ENCODE measurements at regions of chr17 and their contacts with region 1.

Region 1: GRCh38 chr17:4366327-4367063 is at the start of gene UBE2G1:
- DNase-seq: peak; percentile 97 to 100 (median 99)
- ATAC-seq: peak; percentile 93
- H3K4me3 ChIP-seq: peak within 1 kb of the TSS; percentile 58
- H3K4me3 Mint-ChIP-seq: peak within 1 kb of the TSS; percentile 82 to 95 (median 89)
- H3K27ac ChIP-seq: peak within 1 kb of the TSS; percentile 94
- H3K27ac Mint-ChIP-seq: peak within 1 kb of the TSS; percentile 91 to 99 (median 96)
- H3K4me1 ChIP-seq: peaks cover 11% of the 10 kb centered on the region in 2 donors
- H3K4me1 Mint-ChIP-seq: peaks cover 15 to 37% (median 33%) of the 10 kb centered on the region in 7 donors
- H3K27me3 ChIP-seq: no peaks in the 10 kb centered on the region
- H3K27me3 Mint-ChIP-seq: no peaks in the 10 kb centered on the region
- total RNA-seq, gene UBE2G1: 50.1 to 63.7 (median 56.6) TPM

Region 2: GRCh38 chr17:2511462-2512369 is 1854.8 kb before region 1 on chr17 and contains the start of gene METTL16:
- CTCF ChIA-PET with region 1: no interaction called
- POLR2A ChIA-PET with region 1: no interaction called
- intact Hi-C with region 1: loop called in 1 of 2 experiments (anchors 5 kb)
- DNase-seq: peak; percentile 86 to 99 (median 95)
- ATAC-seq: peak; percentile 99
- H3K4me3 ChIP-seq: peak within 1 kb of the TSS; percentile 74
- H3K4me3 Mint-ChIP-seq: peak within 1 kb of the TSS in 2 of 10 donors; percentile 33 to 55
- H3K27ac ChIP-seq: peak within 1 kb of the TSS; percentile 89
- H3K27ac Mint-ChIP-seq: peak within 1 kb of the TSS in 2 of 9 donors; percentile 32 to 77
- H3K4me1 ChIP-seq: peaks cover 9 to 14% of the 10 kb centered on the region in 2 donors
- H3K4me1 Mint-ChIP-seq: peaks cover 13 to 22% (median 15%) of the 10 kb centered on the region in 7 donors
- H3K27me3 ChIP-seq: no peaks in the 10 kb centered on the region
- H3K27me3 Mint-ChIP-seq: no peaks in the 10 kb centered on the region
- total RNA-seq, gene METTL16: 33.5 to 67.7 (median 52.7) TPM

Region 3: DNA sequence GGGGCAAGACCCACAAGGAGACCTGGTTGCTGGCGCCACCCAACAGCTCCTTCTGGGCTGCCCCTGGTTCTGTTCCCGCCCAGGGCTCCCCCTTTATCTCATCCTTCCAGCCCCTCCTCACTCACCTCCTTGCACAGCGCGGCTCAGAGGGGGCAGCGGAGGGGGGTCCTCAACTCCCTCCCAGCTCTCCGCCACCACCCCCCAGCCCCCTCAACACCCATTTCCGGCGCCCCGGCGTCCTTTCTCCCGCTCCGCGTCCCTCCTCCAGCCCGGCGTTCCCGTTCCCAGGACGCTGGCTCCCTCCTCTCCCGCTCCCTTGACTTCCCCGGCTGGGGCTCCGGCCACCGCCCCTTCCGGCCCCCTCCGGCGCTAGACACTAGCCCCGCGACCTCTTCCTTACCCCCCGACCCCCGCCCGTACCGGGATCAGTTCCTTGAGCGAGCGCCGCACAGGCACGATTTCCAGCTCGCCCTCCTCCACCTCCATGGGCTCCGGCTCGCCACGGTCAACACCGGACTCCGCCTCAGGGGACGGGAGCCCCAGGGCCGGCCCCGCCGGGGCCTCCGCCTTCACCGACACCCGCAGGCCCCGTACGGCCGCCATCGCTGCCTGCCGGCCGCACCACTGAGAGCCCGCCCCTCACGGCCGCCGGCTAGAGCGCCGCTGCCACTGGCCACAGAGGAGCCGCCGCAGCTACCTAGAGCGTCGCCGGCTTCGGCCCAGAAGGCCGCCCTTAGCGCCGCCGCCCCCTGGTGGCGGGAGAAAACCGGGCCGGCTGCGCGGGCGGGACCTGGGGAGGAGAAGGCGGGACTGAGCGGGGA is 520.7 kb before region 1 on chr17 and contains the start of gene NCBP3:
- CTCF ChIA-PET with region 1: no interaction called
- POLR2A ChIA-PET with region 1: no interaction called
- intact Hi-C with region 1: loop called in 1 of 2 experiments (anchors 1 kb)
- DNase-seq: peak; percentile 79 to 98 (median 90)
- ATAC-seq: peak; percentile 98
- H3K4me3 ChIP-seq: peak within 1 kb of the TSS; percentile 83
- H3K4me3 Mint-ChIP-seq: peak within 1 kb of the TSS; percentile 85 to 98 (median 90)
- H3K27ac ChIP-seq: peak within 1 kb of the TSS; percentile 90
- H3K27ac Mint-ChIP-seq: peak within 1 kb of the TSS; percentile 59 to 95 (median 88)
- H3K4me1 ChIP-seq: peaks cover 12 to 17% of the 10 kb centered on the region in 2 donors
- H3K4me1 Mint-ChIP-seq: peaks cover 18 to 33% (median 24%) of the 10 kb centered on the region in 7 donors
- H3K27me3 ChIP-seq: no peaks in the 10 kb centered on the region
- H3K27me3 Mint-ChIP-seq: peaks cover 0 to 13% (median 0%) of the 10 kb centered on the region in 5 donors
- total RNA-seq, gene NCBP3: 40.6 to 49.4 (median 46.7) TPM

Region 4: DNA sequence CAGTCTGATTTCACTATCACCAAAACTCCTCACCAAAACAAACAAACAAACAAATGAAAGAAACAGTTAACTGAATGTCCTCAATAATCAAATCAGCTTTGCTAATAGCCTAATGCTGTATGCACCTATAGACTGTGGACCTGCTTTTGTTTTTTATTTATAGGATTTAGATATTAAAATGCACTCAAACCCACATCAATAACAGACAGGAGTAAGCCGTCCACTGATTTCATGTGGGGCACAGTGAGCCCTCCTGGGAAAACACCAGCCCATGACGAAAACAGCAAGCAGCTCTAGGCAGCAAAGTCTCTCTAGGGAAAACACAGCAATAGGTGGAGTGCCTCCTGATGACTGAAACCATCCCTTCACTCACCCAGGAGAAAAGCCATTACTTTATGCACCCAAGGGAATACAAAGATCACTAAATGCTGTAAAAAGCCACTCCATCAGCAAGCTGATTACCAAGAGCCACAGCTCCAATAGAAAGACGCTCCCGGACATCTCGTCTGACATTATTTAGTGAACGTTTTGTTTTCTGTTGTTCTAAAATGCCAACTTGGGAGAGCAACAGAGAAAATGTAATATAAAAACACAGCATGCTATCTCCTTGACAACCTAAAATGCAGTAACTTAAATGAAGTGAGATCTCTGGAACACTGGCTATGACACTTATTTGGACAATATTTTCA is 150.5 kb before region 1 on chr17:
- CTCF ChIA-PET with region 1: no interaction called
- POLR2A ChIA-PET with region 1: no interaction called
- intact Hi-C with region 1: loop called (anchors 2 to 5 kb)
- DNase-seq: no peak
- ATAC-seq: no peak
- H3K4me3 ChIP-seq: no peak overlapping the region
- H3K4me3 Mint-ChIP-seq: no peak overlapping the region
- H3K27ac ChIP-seq: no peak overlapping the region
- H3K27ac Mint-ChIP-seq: peak overlapping the region in 5 of 9 donors; percentile 3 to 82 (median 75)
- H3K4me1 ChIP-seq: no peaks in the 10 kb centered on the region
- H3K4me1 Mint-ChIP-seq: peaks cover 7 to 13% (median 11%) of the 10 kb centered on the region in 7 donors
- H3K27me3 ChIP-seq: no peaks in the 10 kb centered on the region
- H3K27me3 Mint-ChIP-seq: no peaks in the 10 kb centered on the region

Region 5: DNA sequence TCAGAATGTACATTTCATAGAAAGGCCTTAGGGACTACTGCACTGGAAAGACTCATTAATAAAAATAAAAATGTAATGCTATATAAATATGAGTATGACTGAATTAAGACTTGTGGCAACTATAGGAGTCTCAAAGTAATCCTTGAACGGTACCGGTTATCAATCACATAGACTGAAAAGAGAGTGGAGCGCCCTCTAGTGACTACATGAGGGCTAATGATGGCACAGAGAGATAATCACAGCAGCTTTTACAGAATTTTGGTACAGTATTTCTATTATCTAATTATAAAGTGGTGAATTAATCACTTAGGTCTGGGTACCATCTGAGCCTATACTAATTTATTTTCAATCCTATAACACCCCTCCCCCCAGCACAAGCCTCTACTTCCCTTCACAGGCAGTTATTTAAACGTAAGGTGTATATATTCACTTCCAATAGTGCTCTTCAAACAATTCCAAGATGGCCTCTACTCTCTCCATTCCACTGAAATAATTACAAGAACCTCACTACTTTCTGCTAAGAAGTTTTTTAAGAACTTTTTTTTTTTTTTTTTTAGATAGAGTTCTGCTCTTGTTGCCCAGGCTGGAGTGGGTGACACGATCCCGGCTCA is 62.0 kb before region 1 on chr17:
- CTCF ChIA-PET with region 1: interaction called, 4 read pairs
- POLR2A ChIA-PET with region 1: no interaction called
- intact Hi-C with region 1: loop called in 1 of 2 experiments (anchors 1 kb)
- DNase-seq: peak in 8 of 9 donors; percentile 20 to 66 (median 52)
- ATAC-seq: peak; percentile 90
- H3K4me3 ChIP-seq: no peak overlapping the region
- H3K4me3 Mint-ChIP-seq: no peak overlapping the region
- H3K27ac ChIP-seq: no peak overlapping the region
- H3K27ac Mint-ChIP-seq: no peak overlapping the region
- H3K4me1 ChIP-seq: peaks cover 6 to 9% of the 10 kb centered on the region in 2 donors
- H3K4me1 Mint-ChIP-seq: peaks cover 14 to 33% (median 23%) of the 10 kb centered on the region in 7 donors
- H3K27me3 ChIP-seq: no peaks in the 10 kb centered on the region
- H3K27me3 Mint-ChIP-seq: no peaks in the 10 kb centered on the region

Region 6: DNA sequence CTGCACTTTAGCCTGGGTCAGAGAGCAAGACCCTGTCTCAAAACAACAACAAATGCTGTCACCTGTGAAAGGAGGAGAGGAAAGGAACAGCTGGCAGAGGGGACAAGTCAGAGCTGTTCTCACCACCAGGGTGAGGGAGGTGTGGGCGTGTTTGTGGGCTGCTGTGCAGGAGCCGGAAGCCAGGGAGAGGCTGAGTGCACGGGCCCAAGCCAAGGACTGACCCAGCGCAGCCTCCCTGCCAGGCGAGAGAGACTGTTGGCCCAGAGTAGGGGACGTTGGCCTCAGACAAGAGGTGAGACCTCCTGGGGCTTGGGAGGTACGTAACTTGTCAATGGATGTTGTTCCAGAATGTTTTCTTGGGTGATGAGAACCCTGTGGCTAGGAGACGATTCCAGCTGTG is 142.9 kb after region 1 on chr17:
- CTCF ChIA-PET with region 1: no interaction called
- POLR2A ChIA-PET with region 1: no interaction called
- intact Hi-C with region 1: no loop called
- DNase-seq: peak in 3 of 9 donors; percentile 12 to 40 (median 15)
- ATAC-seq: peak; percentile 51
- H3K4me3 ChIP-seq: no peak overlapping the region
- H3K4me3 Mint-ChIP-seq: peak overlapping the region in 3 of 10 donors; percentile 31 to 38 (median 36)
- H3K27ac ChIP-seq: no peak overlapping the region
- H3K27ac Mint-ChIP-seq: peak overlapping the region in 1 of 9 donors; percentile 48
- H3K4me1 ChIP-seq: peaks cover 6 to 10% of the 10 kb centered on the region in 2 donors
- H3K4me1 Mint-ChIP-seq: peaks cover 20 to 29% (median 25%) of the 10 kb centered on the region in 7 donors
- H3K27me3 ChIP-seq: no peaks in the 10 kb centered on the region
- H3K27me3 Mint-ChIP-seq: peaks cover 0 to 13% (median 5%) of the 10 kb centered on the region in 5 donors

Region 7: DNA sequence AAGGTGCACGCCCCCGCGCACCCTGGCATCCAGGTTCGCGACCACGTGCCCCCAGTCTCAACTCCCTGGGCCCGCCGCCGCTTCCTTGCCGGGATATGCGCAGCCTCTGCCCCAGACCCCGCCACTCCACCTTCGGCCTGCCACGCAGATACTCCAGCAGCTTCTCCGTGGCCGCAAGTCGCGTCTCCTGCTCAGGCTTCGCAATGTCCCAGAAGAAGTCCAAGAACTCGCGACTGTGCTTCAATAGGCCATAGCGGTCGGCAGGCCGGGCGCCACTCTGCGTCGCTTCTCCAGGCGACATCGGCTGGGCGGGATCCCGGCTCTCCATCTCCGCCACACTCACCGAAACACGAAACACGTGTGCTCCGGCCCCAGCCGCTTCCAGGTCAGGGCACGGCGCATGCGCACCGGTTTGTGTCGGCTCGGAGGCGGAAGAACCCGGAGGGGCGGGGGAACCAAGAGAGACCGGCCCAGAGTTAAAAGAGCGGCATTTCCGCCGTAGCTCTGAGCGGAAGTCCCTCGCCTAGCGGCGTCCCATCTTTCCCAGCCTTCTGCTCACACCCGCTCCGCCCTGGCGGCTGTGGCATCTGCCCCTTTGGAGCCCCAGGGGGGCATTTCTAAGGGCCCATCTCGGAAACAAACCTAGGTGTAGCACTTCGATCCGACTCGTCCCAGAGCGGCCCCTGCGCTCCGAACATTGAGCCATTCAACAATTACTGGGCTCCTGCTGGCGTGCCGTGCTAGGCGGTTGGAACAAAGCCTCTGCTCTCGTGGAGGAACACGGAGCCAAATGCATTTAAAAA is 188.7 kb after region 1 on chr17 and contains the start of gene MYBBP1A:
- CTCF ChIA-PET with region 1: no interaction called
- POLR2A ChIA-PET with region 1: no interaction called
- intact Hi-C with region 1: loop called (anchors 1 to 2 kb)
- DNase-seq: peak; percentile 92 to 98 (median 95)
- ATAC-seq: peak; percentile 96
- H3K4me3 ChIP-seq: peak within 1 kb of the TSS; percentile 87
- H3K4me3 Mint-ChIP-seq: peak within 1 kb of the TSS; percentile 87 to 97 (median 95)
- H3K27ac ChIP-seq: peak within 1 kb of the TSS; percentile 79
- H3K27ac Mint-ChIP-seq: peak within 1 kb of the TSS; percentile 88 to 98 (median 96)
- H3K4me1 ChIP-seq: peaks cover 20% of the 10 kb centered on the region in 2 donors
- H3K4me1 Mint-ChIP-seq: peaks cover 16 to 34% (median 27%) of the 10 kb centered on the region in 7 donors
- H3K27me3 ChIP-seq: no peaks in the 10 kb centered on the region
- H3K27me3 Mint-ChIP-seq: no peaks in the 10 kb centered on the region
- total RNA-seq, gene MYBBP1A: 59.8 to 81.8 (median 77.9) TPM

Region 8: GRCh38 chr17:5486204-5487124 is 1120.0 kb after region 1 on chr17 and contains the start of gene MIS12:
- CTCF ChIA-PET with region 1: no interaction called
- POLR2A ChIA-PET with region 1: no interaction called
- intact Hi-C with region 1: loop called in 1 of 2 experiments (anchors 5 kb)
- DNase-seq: peak; percentile 78 to 100 (median 97)
- ATAC-seq: peak; percentile 93
- H3K4me3 ChIP-seq: peak within 1 kb of the TSS; percentile 94
- H3K4me3 Mint-ChIP-seq: peak within 1 kb of the TSS; percentile 88 to 97 (median 94)
- H3K27ac ChIP-seq: peak within 1 kb of the TSS; percentile 98
- H3K27ac Mint-ChIP-seq: peak within 1 kb of the TSS; percentile 95 to 99 (median 98)
- H3K4me1 ChIP-seq: peaks cover 21 to 28% of the 10 kb centered on the region in 2 donors
- H3K4me1 Mint-ChIP-seq: peaks cover 22 to 77% (median 66%) of the 10 kb centered on the region in 7 donors
- H3K27me3 ChIP-seq: no peaks in the 10 kb centered on the region
- H3K27me3 Mint-ChIP-seq: no peaks in the 10 kb centered on the region
- total RNA-seq, gene MIS12: 16.3 to 53.6 (median 38.4) TPM

Measured in naive thymus-derived CD4-positive, alpha-beta T cell (primary cell).